Naive thymus-derived CD4-positive, alpha-beta T cell (primary cell): ENCODE measurements at regions of chr3 and their contacts with region 1.

Region 1: GRCh38 chr3:62201438-62202035 is 171.8 kb downstream of the FEZF2 start:
- DNase-seq: no peak
- ATAC-seq: no peak
- H3K4me3 ChIP-seq: no peak overlapping the region
- H3K4me3 Mint-ChIP-seq: no peak overlapping the region
- H3K27ac ChIP-seq: no peak overlapping the region
- H3K27ac Mint-ChIP-seq: no peak overlapping the region
- H3K4me1 ChIP-seq: no peaks in the 10 kb centered on the region
- H3K4me1 Mint-ChIP-seq: no peaks in the 10 kb centered on the region
- H3K27me3 ChIP-seq: no peaks in the 10 kb centered on the region
- H3K27me3 Mint-ChIP-seq: peaks cover 0 to 19% (median 3%) of the 10 kb centered on the region in 5 donors

Region 2: DNA sequence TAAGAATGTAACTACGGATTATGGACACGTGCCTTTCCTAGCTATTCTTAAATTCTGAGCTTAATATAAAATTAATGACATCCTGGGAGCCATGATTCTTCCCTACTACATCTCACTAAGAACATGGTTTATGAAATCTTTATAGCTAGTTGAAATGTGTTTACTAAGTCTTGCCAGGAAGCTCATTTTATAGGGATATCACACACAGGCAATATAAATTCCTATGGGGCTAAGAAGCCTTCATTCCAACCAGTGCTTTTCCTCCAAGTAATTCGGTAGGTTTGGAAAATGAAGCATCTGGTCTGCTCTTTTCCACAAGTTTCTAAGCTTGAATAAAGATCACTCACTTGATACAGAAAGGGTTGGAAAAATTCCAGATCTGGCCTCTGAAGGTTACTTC is 1752.8 kb before region 1 on chr3:
- CTCF ChIA-PET with region 1: no interaction called
- POLR2A ChIA-PET with region 1: no interaction called
- intact Hi-C with region 1: no loop called
- DNase-seq: no peak
- ATAC-seq: no peak
- H3K4me3 ChIP-seq: no peak overlapping the region
- H3K4me3 Mint-ChIP-seq: no peak overlapping the region
- H3K27ac ChIP-seq: no peak overlapping the region
- H3K27ac Mint-ChIP-seq: no peak overlapping the region
- H3K4me1 ChIP-seq: no peaks in the 10 kb centered on the region
- H3K4me1 Mint-ChIP-seq: peaks cover 0 to 9% (median 3%) of the 10 kb centered on the region in 7 donors
- H3K27me3 ChIP-seq: no peaks in the 10 kb centered on the region
- H3K27me3 Mint-ChIP-seq: no peaks in the 10 kb centered on the region

Region 3: DNA sequence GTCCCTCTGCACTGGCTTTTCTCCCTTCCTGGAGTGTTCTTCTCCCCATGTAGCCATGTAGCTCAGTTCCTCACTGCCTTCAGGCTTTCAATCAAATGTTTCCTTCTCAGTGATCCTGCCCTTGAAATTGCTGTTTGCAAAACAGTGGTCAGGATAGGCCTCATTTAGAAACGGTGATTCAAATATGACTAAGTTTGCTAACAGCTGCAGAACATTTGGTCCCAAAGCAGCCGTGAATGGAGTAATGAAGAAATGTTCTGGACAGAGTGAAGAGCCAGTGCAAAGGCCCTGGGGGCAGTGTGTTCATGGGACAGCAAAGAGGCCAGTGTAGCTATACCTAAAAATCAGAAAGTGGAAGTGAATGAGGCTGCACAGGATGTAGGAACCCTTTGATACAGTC is 51.6 kb before region 1 on chr3:
- CTCF ChIA-PET with region 1: no interaction called
- POLR2A ChIA-PET with region 1: no interaction called
- intact Hi-C with region 1: no loop called
- DNase-seq: no peak
- ATAC-seq: no peak
- H3K4me3 ChIP-seq: no peak overlapping the region
- H3K4me3 Mint-ChIP-seq: no peak overlapping the region
- H3K27ac ChIP-seq: no peak overlapping the region
- H3K27ac Mint-ChIP-seq: no peak overlapping the region
- H3K4me1 ChIP-seq: no peaks in the 10 kb centered on the region
- H3K4me1 Mint-ChIP-seq: peaks cover 0 to 5% (median 0%) of the 10 kb centered on the region in 7 donors
- H3K27me3 ChIP-seq: no peaks in the 10 kb centered on the region
- H3K27me3 Mint-ChIP-seq: peaks cover 0 to 16% (median 4%) of the 10 kb centered on the region in 5 donors

Region 4: DNA sequence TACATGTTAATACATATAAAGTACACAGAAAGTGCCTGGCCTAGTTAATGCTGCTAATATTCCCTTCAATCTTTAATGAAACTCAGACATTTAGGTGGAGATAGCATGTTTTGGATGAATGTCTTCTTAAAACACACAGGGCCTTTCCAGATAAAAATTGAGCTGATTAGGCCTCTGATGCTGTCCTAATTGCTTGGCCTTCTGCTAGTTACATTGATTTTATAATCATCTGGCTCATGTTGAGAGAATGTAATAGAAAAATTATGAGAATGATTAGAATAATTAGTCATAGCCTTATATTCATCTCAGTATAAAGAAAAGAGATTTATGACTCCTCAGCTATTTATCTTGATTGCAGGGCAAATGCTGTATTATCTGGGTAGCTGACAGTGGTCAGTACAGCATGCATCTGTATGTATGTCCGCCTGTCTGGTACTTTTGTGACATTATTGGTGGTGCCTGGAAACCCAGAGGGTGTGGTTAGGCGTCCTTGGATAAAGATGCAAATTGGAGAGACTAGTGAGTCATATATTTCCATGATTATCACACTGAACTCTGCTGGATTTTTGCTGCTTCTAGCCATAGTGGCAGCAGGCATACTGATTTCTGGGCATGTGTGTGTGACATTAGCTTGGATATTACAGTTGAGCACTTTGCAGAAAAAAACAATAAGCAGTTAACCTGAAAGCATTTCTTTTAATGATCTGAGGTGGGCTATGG is 51.1 kb after region 1 on chr3:
- CTCF ChIA-PET with region 1: no interaction called
- POLR2A ChIA-PET with region 1: no interaction called
- intact Hi-C with region 1: no loop called
- DNase-seq: no peak
- ATAC-seq: no peak
- H3K4me3 ChIP-seq: no peak overlapping the region
- H3K4me3 Mint-ChIP-seq: no peak overlapping the region
- H3K27ac ChIP-seq: no peak overlapping the region
- H3K27ac Mint-ChIP-seq: no peak overlapping the region
- H3K4me1 ChIP-seq: no peaks in the 10 kb centered on the region
- H3K4me1 Mint-ChIP-seq: no peaks in the 10 kb centered on the region
- H3K27me3 ChIP-seq: no peaks in the 10 kb centered on the region
- H3K27me3 Mint-ChIP-seq: peaks cover 0 to 18% (median 9%) of the 10 kb centered on the region in 5 donors

Region 5: DNA sequence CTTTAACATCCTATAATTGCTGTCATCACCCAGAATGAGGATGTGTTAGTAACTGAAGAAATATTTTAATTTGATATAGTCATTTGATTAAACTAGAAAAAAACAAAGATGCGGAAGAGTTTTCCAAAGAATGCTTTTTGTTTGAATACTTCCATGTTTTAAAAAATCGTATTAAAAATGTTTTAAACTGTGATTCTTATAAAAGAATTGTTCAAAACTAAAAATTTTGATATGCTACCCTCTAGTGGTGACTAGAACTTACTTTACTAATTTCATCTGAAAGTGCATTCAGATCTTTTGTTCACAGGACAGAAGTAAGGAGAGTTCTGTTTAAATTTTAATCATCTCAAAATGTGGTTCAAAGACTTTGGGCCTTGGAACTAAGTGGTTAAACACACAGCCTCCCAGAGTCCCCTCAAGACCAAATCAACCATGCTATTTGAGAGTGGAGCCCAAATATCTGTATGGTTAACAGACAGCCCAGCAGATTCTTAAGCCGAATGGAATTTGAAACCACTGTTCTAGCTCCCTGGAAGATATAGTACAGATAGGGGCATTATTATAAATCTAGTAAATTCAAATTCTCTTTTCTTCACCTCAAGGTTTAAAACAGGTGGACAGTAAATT is 1031.3 kb after region 1 on chr3:
- CTCF ChIA-PET with region 1: no interaction called
- POLR2A ChIA-PET with region 1: no interaction called
- intact Hi-C with region 1: loop called in 1 of 2 experiments (anchors 5 kb)
- DNase-seq: no peak
- ATAC-seq: no peak
- H3K4me3 ChIP-seq: no peak overlapping the region
- H3K4me3 Mint-ChIP-seq: no peak overlapping the region
- H3K27ac ChIP-seq: no peak overlapping the region
- H3K27ac Mint-ChIP-seq: no peak overlapping the region
- H3K4me1 ChIP-seq: no peaks in the 10 kb centered on the region
- H3K4me1 Mint-ChIP-seq: no peaks in the 10 kb centered on the region
- H3K27me3 ChIP-seq: no peaks in the 10 kb centered on the region
- H3K27me3 Mint-ChIP-seq: no peaks in the 10 kb centered on the region